Activated CD4-positive, alpha-beta T cell treated with anti-CD3 and anti-CD28 coated beads, Interleukin-2, amount 10 ng/mL, durations not matched to agents 7 days and 5 days (primary cell): ENCODE measurements at regions of chr11 and their contacts with region 1.

Region 1: DNA sequence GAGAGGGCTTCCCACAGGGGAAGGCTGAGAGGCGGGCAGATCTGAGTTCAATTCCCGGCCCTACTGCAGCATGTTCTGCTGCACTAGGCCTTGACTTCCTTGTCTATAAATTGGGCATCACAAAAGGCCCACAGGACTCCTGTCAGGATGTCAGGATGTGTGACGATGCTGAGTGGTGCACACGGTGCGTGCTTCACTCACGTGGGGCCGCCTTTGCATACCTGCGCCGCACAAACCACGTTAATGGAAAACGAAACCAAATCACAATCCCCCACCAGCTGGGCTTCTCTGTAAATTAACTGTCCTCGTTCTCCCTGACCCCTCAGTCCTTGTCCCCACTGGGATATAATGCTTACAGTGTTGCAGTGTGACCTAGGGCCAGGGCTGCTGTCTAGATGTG is 32.3 kb upstream of the TSPAN18 start:
- DNase-seq: no peak
- H3K4me3 Mint-ChIP-seq: no peak overlapping the region
- H3K27ac Mint-ChIP-seq: peak overlapping the region; percentile 69
- H3K4me1 Mint-ChIP-seq: peaks cover 5% of the 10 kb centered on the region
- H3K27me3 Mint-ChIP-seq: peaks cover 3% of the 10 kb centered on the region

Region 2: GRCh38 chr11:44680982-44681597 is 13.4 kb before region 1 on chr11:
- CTCF ChIA-PET with region 1: interaction called, 15 read pairs
- POLR2A ChIA-PET with region 1: no interaction called
- DNase-seq: peak; percentile 80
- H3K4me3 Mint-ChIP-seq: peak overlapping the region; percentile 72
- H3K27ac Mint-ChIP-seq: peak overlapping the region; percentile 90
- H3K4me1 Mint-ChIP-seq: peaks cover 44% of the 10 kb centered on the region
- H3K27me3 Mint-ChIP-seq: peaks cover 3% of the 10 kb centered on the region